G401 (cell line): ENCODE measurements at regions of chr17 and their contacts with region 1.

Region 1: DNA sequence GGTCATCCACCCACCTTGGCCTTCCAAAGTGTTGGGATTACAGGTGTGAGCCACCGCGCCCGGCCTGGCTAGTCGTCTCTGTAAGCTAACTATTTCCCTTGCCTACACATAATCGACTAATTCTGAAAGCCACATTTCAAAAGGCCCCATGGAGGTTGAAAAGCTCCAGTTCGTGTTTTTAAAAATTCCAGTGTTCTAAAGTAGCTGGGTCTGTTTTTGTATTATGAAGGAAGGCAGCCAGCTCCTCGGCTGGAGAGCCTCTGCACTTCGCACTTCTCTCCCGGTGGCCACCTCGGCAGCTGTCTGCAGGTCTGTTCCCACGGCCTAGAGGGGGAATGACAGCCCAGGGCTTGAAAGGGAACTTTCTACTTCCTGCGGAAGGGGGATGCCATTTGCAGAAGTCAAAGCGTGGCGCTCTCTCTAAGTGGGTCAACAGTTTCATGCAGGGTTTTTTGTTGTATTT is 16.9 kb downstream of the HASPIN start:
- DNase-seq: no peak

Region 2: GRCh38 chr17:3780986-3781385 is 40.3 kb after region 1 on chr17:
- in situ Hi-C with region 1: no loop called
- DNase-seq: no peak

Region 3: DNA sequence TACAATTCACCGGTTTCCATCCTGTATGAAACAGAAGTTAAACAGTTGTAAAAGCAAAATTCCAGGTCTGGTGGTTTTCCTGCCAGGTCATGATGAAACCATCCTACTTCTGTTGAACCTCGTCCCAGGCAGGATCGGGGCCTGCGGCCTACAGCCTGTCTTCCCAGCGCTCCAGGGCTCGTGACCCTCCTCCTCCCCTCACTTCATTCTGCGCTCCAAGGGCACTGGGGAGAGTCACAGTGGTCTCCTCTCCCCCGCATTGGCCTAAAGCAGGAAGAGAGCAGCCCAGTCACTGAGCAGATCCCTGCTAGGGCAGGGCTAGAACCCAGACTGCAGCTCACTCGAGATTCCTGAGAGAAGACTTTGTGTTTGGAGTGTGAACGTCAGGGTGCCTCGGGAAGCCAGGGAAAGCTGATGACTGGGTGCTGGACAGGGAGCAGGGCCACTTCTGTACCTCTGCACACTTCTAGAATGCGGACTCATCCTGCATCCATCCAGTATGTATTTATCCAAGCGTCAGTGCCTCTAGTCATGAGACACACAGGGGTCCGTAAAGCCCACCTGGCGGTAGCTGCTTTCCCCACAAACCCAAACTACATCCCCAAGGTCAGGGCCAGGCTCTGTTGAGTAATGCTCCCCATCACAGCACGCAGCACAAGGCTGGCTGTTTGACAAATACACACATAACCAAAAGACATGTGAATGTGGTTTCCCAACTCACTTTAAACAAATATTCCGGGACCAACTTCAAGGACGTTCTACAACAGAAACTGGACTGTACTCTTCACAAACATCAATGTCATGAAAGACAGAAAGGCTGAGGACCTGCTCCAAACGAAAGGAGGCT is 62.0 kb after region 1 on chr17:
- in situ Hi-C with region 1: loop called (anchors 10 kb)
- DNase-seq: no peak